ENCODE measurements at regions of chr4 and their contacts with region 1.

Region 1: GRCh38 chr4:48429709-48430474 is 53.3 kb upstream of the SLC10A4 start:
- DNase-seq: no peak
- H3K4me3 Mint-ChIP-seq: no peak overlapping the region
- H3K27ac Mint-ChIP-seq: no peak overlapping the region
- H3K4me1 Mint-ChIP-seq: peaks cover 36% of the 10 kb centered on the region
- H3K27me3 Mint-ChIP-seq: no peaks in the 10 kb centered on the region

Region 2: DNA sequence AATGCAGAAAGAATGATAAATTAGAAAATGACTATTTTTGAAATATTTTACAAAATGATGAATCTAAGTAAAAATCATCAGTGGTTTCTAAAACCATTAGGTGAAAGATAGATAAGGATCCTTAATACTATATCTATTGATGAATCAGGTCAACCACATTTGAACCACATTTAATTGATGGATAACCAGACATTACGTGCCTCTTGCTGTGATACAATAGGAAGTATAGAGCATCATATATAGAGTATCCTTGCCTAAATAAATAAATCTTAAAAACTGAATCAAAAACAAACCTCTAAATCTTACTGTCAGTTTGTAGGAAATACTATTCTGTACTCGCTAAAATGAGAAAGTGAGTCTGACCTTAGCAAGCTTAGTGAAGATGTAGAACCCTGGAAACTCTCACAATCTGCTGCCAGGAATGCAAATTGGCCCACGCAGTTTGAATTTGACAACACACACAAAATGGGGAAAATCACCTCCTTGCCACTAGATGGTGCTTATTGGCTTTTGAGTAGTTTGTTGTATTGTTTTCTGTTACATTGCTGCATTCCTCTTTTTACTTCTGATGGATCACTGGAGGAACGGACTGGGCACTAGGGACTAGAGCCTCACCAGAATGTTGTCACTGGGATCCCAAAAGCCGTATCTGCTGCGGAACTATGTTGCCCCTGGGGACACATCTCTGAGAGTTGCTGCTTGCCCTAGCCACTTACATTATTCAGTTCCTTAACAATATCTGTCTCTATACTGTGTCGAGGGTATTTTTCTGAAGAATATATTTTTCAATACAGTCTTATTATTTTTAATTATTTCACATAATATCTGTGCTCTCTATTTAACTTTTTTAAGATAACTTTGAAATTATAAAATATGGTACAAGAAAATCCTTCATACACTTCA is 113.9 kb before region 1 on chr4:
- CTCF ChIA-PET with region 1: no interaction called
- POLR2A ChIA-PET with region 1: no interaction called
- intact Hi-C with region 1: loop called (anchors 5 kb)
- DNase-seq: peak; percentile 43
- H3K4me3 Mint-ChIP-seq: no peak overlapping the region
- H3K27ac Mint-ChIP-seq: no peak overlapping the region
- H3K4me1 Mint-ChIP-seq: peaks cover 5% of the 10 kb centered on the region
- H3K27me3 Mint-ChIP-seq: no peaks in the 10 kb centered on the region

Region 3: DNA sequence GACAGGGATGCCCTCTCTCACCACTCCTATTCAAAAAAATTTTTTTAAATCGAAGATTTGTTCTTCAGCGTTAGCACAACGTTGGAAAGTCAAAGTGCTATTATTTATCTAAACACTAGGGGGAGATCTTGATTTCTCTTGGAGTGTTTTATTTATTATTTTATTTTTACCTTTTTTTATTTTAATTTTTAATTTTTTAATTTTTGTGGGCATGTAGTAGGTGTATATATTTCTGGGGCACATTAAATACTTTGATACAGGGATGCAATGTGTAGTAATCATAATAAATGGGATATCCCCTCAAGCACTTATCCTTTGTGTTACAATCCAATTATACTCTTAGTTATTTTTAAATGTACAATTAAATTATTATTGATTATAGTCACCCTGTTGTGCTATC is 15.8 kb after region 1 on chr4:
- CTCF ChIA-PET with region 1: no interaction called
- POLR2A ChIA-PET with region 1: no interaction called
- intact Hi-C with region 1: no loop called
- DNase-seq: no peak
- H3K4me3 Mint-ChIP-seq: no peak overlapping the region
- H3K27ac Mint-ChIP-seq: no peak overlapping the region
- H3K4me1 Mint-ChIP-seq: no peaks in the 10 kb centered on the region
- H3K27me3 Mint-ChIP-seq: peaks cover 7% of the 10 kb centered on the region

Region 4: DNA sequence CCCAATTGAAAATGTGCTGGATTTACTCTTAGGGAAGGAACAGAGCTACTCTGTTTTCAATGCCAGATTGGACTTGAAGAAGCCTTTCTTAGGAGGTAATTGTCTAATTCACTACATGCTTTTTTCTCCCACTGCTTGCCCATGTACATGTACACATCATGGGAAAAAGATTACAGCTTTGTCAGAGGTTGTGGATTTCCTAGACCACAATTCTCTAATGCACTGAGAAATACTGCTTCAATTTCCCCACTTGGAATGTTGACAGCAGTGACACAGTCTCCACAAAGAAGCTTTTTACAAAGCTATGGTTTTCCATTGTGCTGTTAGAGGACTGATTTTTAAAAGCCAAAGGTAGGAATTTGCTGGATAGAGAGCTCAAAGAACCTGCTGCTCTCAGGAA is 79.7 kb after region 1 on chr4:
- CTCF ChIA-PET with region 1: no interaction called
- POLR2A ChIA-PET with region 1: no interaction called
- intact Hi-C with region 1: no loop called
- DNase-seq: no peak
- H3K4me3 Mint-ChIP-seq: no peak overlapping the region
- H3K27ac Mint-ChIP-seq: no peak overlapping the region
- H3K4me1 Mint-ChIP-seq: no peaks in the 10 kb centered on the region
- H3K27me3 Mint-ChIP-seq: no peaks in the 10 kb centered on the region

Region 5: GRCh38 chr4:48623182-48623780 is 193.4 kb after region 1 on chr4:
- CTCF ChIA-PET with region 1: no interaction called
- POLR2A ChIA-PET with region 1: no interaction called
- intact Hi-C with region 1: no loop called
- DNase-seq: no peak
- H3K4me3 Mint-ChIP-seq: no peak overlapping the region
- H3K27ac Mint-ChIP-seq: no peak overlapping the region
- H3K4me1 Mint-ChIP-seq: no peaks in the 10 kb centered on the region
- H3K27me3 Mint-ChIP-seq: no peaks in the 10 kb centered on the region

Region 6: GRCh38 chr4:48681856-48682255 is 252.0 kb after region 1 on chr4:
- CTCF ChIA-PET with region 1: no interaction called
- POLR2A ChIA-PET with region 1: no interaction called
- intact Hi-C with region 1: no loop called
- DNase-seq: no peak
- H3K4me3 Mint-ChIP-seq: no peak overlapping the region
- H3K27ac Mint-ChIP-seq: peak overlapping the region; percentile 39
- H3K4me1 Mint-ChIP-seq: peaks cover 36% of the 10 kb centered on the region
- H3K27me3 Mint-ChIP-seq: no peaks in the 10 kb centered on the region

Measured in activated CD4-positive, alpha-beta memory T cell treated with anti-CD3 and anti-CD28 coated beads for 36 hours (primary cell).